PC-9 (cell line): ENCODE measurements at regions of chr2 and their contacts with region 1.

Region 1: GRCh38 chr2:10346929-10347561 is 44.3 kb downstream of the HPCAL1 start:
- DNase-seq: no peak
- H3K4me3 ChIP-seq: no peak overlapping the region
- H3K27ac ChIP-seq: no peak overlapping the region
- H3K4me1 ChIP-seq: no peaks in the 10 kb centered on the region; the same call in 1 of the 2 replicates
- H3K27me3 ChIP-seq: no peaks in the 10 kb centered on the region
- CTCF ChIP-seq: no peak

Region 2: DNA sequence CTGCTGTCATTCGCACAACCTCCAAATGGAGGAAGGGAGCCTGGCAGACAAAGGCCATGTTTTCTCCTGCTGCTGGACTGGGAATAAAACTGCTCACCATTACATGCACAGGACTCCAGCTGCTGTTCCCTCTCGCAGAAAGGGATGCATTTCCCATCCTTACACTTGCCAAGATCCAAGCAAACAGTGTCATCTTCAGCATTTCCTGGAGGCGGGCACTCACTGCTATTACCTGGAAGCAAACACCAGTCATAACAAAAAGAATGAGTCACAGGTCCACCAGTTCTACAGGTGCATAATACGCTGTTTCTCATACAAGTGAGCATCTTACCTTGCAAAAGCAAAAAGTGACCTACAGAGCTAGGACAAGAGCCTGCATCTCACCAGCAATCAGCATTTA is 850.0 kb before region 1 on chr2:
- CTCF ChIA-PET with region 1: no interaction called
- POLR2A ChIA-PET with region 1: interaction called, 11 read pairs
- intact Hi-C with region 1: no loop called
- DNase-seq: peak in 1 of 2 experiments; percentile 72
- H3K4me3 ChIP-seq: no peak overlapping the region
- H3K27ac ChIP-seq: no peak overlapping the region
- H3K4me1 ChIP-seq: no peaks in the 10 kb centered on the region
- H3K27me3 ChIP-seq: no peaks in the 10 kb centered on the region
- CTCF ChIP-seq: no peak

Region 3: GRCh38 chr2:10157293-10157692 is 189.8 kb before region 1 on chr2:
- CTCF ChIA-PET with region 1: no interaction called
- POLR2A ChIA-PET with region 1: no interaction called
- intact Hi-C with region 1: no loop called
- DNase-seq: no peak
- H3K4me3 ChIP-seq: no peak overlapping the region
- H3K27ac ChIP-seq: no peak overlapping the region
- H3K4me1 ChIP-seq: no peaks in the 10 kb centered on the region
- H3K27me3 ChIP-seq: no peaks in the 10 kb centered on the region
- CTCF ChIP-seq: no peak

Region 4: GRCh38 chr2:10400568-10400977 is 53.5 kb after region 1 on chr2:
- CTCF ChIA-PET with region 1: no interaction called
- POLR2A ChIA-PET with region 1: no interaction called
- intact Hi-C with region 1: no loop called
- DNase-seq: peak in 1 of 2 experiments; percentile 30
- H3K4me3 ChIP-seq: no peak overlapping the region
- H3K27ac ChIP-seq: 0 out of 2 replicates have a peak overlapping the region, but pooled peaks have one; percentile 36
- H3K4me1 ChIP-seq: peaks cover 49% of the 10 kb centered on the region
- H3K27me3 ChIP-seq: no peaks in the 10 kb centered on the region
- CTCF ChIP-seq: no peak